Caco-2 (cell line): ENCODE measurements at regions of chr3 and their contacts with region 1.

Region 1: GRCh38 chr3:138941259-138941885 is 5.6 kb downstream of the FOXL2 start:
- DNase-seq: peak; percentile 63 to 73
- H3K4me3 ChIP-seq: no peak overlapping the region
- H3K4me3 Mint-ChIP-seq: no peak overlapping the region
- H3K27ac Mint-ChIP-seq: no peak overlapping the region
- H3K4me1 ChIP-seq: peaks cover 5% of the 10 kb centered on the region
- H3K4me1 Mint-ChIP-seq: peaks cover 8% of the 10 kb centered on the region
- H3K27me3 ChIP-seq: no peaks in the 10 kb centered on the region; the same call in 1 of the 2 replicates
- H3K27me3 Mint-ChIP-seq: peaks cover 12% of the 10 kb centered on the region
- CTCF ChIP-seq: peak; percentile 43 to 88

Region 2: GRCh38 chr3:138824114-138824506 is 117.3 kb before region 1 on chr3:
- CTCF ChIA-PET with region 1: no interaction called
- POLR2A ChIA-PET with region 1: no interaction called
- intact Hi-C with region 1: no loop called
- DNase-seq: peak; percentile 37 to 47
- H3K4me3 ChIP-seq: no peak overlapping the region
- H3K4me3 Mint-ChIP-seq: no peak overlapping the region
- H3K27ac Mint-ChIP-seq: peak overlapping the region; percentile 81
- H3K4me1 ChIP-seq: peaks cover 27% of the 10 kb centered on the region
- H3K4me1 Mint-ChIP-seq: peaks cover 10% of the 10 kb centered on the region
- H3K27me3 ChIP-seq: no peaks in the 10 kb centered on the region
- H3K27me3 Mint-ChIP-seq: no peaks in the 10 kb centered on the region
- CTCF ChIP-seq: no peak

Region 3: GRCh38 chr3:138984816-138985215 is 43.4 kb after region 1 on chr3:
- CTCF ChIA-PET with region 1: interaction called, 15 read pairs
- POLR2A ChIA-PET with region 1: no interaction called
- intact Hi-C with region 1: loop called (anchors 1 kb)
- DNase-seq: no peak
- H3K4me3 ChIP-seq: no peak overlapping the region
- H3K4me3 Mint-ChIP-seq: no peak overlapping the region
- H3K27ac Mint-ChIP-seq: no peak overlapping the region
- H3K4me1 ChIP-seq: no peaks in the 10 kb centered on the region
- H3K4me1 Mint-ChIP-seq: no peaks in the 10 kb centered on the region
- H3K27me3 ChIP-seq: peaks cover 3% of the 10 kb centered on the region; the same call in 1 of the 2 replicates
- H3K27me3 Mint-ChIP-seq: peaks cover 2% of the 10 kb centered on the region
- CTCF ChIP-seq: no peak

Region 4: DNA sequence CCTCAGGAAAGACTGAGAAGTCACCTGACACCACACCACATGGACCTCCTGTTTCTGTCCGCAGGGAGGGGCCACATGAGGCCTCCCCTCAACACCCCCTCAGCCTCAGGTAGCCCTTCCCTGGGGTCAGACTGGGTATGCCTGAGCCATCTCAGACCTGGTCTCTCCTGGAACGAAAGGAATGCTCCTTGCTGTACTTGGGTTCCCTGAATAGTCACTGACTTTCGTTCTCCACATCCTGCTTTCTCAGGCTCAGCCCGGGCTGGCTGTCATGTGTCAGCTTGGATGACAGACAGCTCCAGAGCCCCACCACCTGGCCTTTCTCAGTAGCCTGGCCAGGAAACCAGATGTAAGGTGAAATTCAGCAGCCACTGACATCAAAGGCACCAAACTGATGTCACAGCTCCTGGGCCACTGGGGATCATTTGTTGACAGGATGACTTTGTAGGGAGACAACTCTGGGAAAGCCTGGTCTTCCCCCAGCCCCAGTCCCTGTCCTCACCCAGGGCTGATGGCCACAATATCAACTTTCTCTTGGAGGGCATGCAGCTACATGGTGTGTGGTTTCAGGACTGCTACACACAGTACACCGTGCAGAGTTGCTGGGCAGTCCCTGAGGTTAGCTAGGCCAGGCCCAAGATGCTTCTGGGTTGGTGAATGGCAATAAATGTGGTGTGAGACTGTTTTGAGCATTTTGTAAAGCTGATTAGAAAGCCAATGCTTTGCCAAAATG is 261.0 kb after region 1 on chr3:
- CTCF ChIA-PET with region 1: interaction called, 5 read pairs
- POLR2A ChIA-PET with region 1: no interaction called
- intact Hi-C with region 1: loop called (anchors 1 kb)
- DNase-seq: peak; percentile 68 to 75
- H3K4me3 ChIP-seq: no peak overlapping the region
- H3K4me3 Mint-ChIP-seq: no peak overlapping the region
- H3K27ac Mint-ChIP-seq: no peak overlapping the region
- H3K4me1 ChIP-seq: no peaks in the 10 kb centered on the region
- H3K4me1 Mint-ChIP-seq: no peaks in the 10 kb centered on the region
- H3K27me3 ChIP-seq: no peaks in the 10 kb centered on the region
- H3K27me3 Mint-ChIP-seq: no peaks in the 10 kb centered on the region
- CTCF ChIP-seq: peak; percentile 22 to 65

Region 5: DNA sequence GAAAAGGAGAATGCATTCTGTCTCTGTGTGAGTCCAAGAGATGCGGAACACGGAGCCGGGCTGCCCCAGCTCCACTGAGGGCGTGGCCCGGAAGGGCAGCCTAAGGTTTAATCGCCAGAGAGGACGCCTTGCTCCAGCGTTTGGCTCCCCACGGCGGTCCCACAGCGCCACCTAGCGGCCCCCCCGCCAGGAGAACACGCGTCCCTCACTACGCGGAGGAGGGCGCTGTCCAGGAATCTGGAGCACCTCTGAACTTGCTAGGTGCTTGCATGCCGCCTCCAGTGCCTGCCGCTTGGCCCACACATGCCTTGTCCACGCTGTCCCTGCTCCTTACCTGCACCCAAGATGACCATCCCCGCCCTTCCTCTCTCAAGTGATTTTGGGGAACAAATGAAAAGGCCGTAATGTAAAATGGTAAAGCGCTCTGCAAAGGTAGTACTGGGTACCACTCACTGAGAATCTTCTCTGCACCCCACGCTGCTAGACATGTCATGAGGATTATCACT is 388.0 kb after region 1 on chr3:
- CTCF ChIA-PET with region 1: interaction called, 15 read pairs
- POLR2A ChIA-PET with region 1: no interaction called
- intact Hi-C with region 1: loop called (anchors 1 kb)
- DNase-seq: peak; percentile 88 to 95
- H3K4me3 ChIP-seq: peak overlapping the region; percentile 19
- H3K4me3 Mint-ChIP-seq: peak overlapping the region; percentile 46
- H3K27ac Mint-ChIP-seq: no peak overlapping the region
- H3K4me1 ChIP-seq: no peaks in the 10 kb centered on the region; the same call in 1 of the 2 replicates
- H3K4me1 Mint-ChIP-seq: no peaks in the 10 kb centered on the region
- H3K27me3 ChIP-seq: no peaks in the 10 kb centered on the region; the same call in 1 of the 2 replicates
- H3K27me3 Mint-ChIP-seq: peaks cover 12% of the 10 kb centered on the region
- CTCF ChIP-seq: peak; percentile 97 to 99